ENCODE measurements at regions of chr6 and their contacts with region 1.

Region 1: DNA sequence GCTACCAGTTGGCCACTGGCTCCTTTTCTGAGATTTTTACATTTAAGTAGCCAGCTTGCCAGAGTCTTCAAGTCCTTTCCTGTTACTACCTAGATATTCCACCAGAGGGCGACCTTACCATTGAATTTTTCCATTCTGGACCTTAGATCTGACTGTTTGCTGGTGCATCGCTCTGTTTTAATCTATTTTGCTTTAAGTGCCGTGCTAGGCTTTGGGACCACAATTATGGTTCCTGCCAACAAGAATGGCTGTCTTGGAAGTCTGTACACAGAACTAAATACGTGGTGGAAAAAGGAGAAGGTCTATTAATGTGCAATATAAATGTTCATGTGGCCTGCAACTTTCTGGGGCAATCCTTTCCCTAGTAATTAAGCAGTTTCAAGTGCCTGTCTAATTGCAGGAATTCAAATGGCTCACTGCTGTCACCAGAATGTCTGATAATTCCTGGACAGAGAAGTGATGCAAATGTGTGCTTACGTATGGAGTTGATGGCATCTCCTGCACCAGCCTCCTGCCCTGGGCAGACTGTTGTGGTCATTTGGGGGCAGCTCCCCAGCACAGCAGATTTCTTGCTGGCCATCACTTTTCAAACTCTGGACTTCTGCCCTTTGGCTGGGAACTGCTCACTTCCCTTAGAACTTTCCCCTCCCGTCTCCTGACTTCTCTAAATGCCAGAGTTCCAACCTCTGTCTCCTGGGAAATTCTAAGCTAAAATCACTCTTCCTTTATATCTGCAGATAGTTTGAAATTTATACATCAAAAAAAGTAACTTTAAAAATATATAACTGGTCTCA is 5.6 kb upstream of the HLA-DOA start:
- DNase-seq: peak; percentile 53
- ATAC-seq: peak; percentile 81
- H3K4me3 Mint-ChIP-seq: no peak overlapping the region
- H3K27ac Mint-ChIP-seq: no peak overlapping the region
- H3K4me1 Mint-ChIP-seq: peaks cover 23% of the 10 kb centered on the region
- H3K27me3 Mint-ChIP-seq: no peaks in the 10 kb centered on the region

Region 2: GRCh38 chr6:33082702-33083101 is 67.7 kb after region 1 on chr6:
- CTCF ChIA-PET with region 1: interaction called, 41 read pairs
- POLR2A ChIA-PET with region 1: no interaction called
- intact Hi-C with region 1: loop called (anchors 1 kb)
- DNase-seq: no peak
- ATAC-seq: peak; percentile 70
- H3K4me3 Mint-ChIP-seq: no peak overlapping the region
- H3K27ac Mint-ChIP-seq: no peak overlapping the region
- H3K4me1 Mint-ChIP-seq: peaks cover 6% of the 10 kb centered on the region
- H3K27me3 Mint-ChIP-seq: peaks cover 3% of the 10 kb centered on the region

Region 3: GRCh38 chr6:33091957-33092356 is 76.9 kb after region 1 on chr6:
- CTCF ChIA-PET with region 1: interaction called, 5 read pairs
- POLR2A ChIA-PET with region 1: no interaction called
- intact Hi-C with region 1: loop called (anchors 1 to 2 kb)
- DNase-seq: peak; percentile 80
- ATAC-seq: peak; percentile 83
- H3K4me3 Mint-ChIP-seq: no peak overlapping the region
- H3K27ac Mint-ChIP-seq: no peak overlapping the region
- H3K4me1 Mint-ChIP-seq: no peaks in the 10 kb centered on the region
- H3K27me3 Mint-ChIP-seq: peaks cover 9% of the 10 kb centered on the region

Measured in activated CD4-positive, alpha-beta T cell treated with anti-CD3 and anti-CD28 coated beads for 36 hours (primary cell).